ENCODE measurements at regions of chr6 and their contacts with region 1.

Region 1: DNA sequence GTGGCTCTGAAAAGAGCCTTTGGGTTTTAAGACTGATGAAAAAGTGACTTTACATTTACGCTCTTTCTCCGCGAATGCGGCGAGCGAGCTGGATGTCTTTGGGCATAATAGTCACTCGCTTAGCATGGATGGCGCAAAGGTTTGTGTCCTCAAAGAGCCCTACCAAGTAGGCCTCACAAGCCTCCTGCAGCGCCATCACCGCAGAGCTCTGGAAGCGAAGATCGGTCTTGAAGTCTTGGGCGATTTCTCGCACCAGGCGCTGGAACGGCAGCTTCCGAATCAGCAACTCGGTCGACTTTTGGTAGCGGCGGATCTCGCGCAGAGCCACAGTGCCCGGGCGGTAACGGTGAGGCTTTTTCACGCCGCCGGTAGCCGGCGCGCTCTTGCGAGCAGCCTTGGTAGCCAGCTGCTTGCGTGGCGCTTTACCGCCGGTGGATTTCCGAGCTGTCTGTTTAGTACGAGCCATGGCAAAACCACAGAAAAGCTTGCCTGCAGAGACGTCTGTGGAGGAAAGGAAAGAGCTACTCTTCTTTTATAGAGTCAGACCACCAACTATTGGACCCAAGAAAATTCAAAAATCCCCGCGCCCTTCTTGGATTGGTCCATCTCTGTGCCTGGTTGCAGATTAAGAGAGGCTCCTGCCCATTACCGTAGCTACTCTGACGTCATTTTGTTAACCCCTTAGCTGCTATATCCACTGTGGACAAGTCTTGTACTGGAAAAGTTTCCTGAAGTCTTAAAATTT is 55.5 kb upstream of the HFE start:
- DNase-seq: peak; percentile 100
- ATAC-seq: peak; percentile 79
- H3K4me3 ChIP-seq: peak overlapping the region; percentile 71 to 83 (median 82)
- H3K27ac ChIP-seq: peak overlapping the region; percentile 93
- H3K4me1 ChIP-seq: peaks cover 37% of the 10 kb centered on the region
- H3K27me3 ChIP-seq: no peaks in the 10 kb centered on the region; a peak in 1 of 5 replicates
- CTCF ChIP-seq: peak; percentile 52
- EP300 ChIP-seq: peak; percentile 40 to 80; a peak in 2 of 4 replicates
- POLR2A ChIP-seq: peak; percentile 99
- RAD21 ChIP-seq: peak; percentile 61

Region 2: DNA sequence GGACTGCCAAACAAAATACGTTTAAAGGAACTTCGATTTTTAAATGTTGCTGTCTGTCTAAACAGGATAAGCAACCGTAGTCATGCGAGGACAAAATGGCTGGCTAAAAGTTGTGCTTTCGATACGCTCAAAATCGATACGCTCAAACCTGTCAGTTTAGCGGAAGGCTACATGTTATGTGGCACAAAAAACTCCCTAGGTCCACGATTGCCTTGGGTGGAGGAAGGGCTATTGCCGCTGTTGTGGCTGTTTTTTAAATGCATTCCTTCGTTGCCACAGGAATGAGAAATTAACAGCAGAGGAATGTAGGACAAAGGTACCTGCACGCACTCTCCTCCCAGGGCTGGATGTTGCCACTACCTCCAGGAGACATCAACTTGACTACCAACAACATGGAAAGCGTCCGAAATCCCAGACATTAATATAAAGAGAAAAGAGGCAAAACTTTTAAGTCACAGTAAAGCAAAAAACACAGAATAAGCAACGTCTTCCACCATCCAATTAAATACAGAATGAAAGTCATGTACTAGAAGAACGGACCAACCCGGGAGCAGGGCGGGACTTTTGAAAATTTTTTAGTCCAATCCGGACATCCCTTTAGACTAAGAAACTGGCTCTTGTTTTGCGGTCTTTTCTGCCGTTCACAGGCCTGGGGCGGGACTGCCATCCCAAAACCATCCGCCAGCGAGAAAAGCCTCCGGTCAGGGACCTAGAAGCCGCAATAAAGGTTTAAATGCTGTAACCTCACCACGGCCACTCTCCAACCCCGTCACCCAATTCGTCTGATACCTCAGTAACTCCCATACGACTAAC is 23.3 kb after region 1 on chr6:
- CTCF ChIA-PET with region 1: no interaction called
- POLR2A ChIA-PET with region 1: interaction called, 16 read pairs
- in situ Hi-C with region 1: no loop called
- intact Hi-C with region 1: loop called (anchors 1 kb)
- DNase-seq: peak; percentile 97
- ATAC-seq: peak; percentile 82
- H3K4me3 ChIP-seq: peak overlapping the region; percentile 69 to 85 (median 85)
- H3K27ac ChIP-seq: peak overlapping the region; percentile 90
- H3K4me1 ChIP-seq: peaks cover 26% of the 10 kb centered on the region
- H3K27me3 ChIP-seq: no peaks in the 10 kb centered on the region; a peak in 1 of 5 replicates
- CTCF ChIP-seq: peak; percentile 32; the same call in 1 of the 2 replicates
- EP300 ChIP-seq: peak in 1 of 2 experiments; percentile 27; a peak in 1 of 4 replicates
- POLR2A ChIP-seq: peak; percentile 79 to 98; a peak in 3 of 4 replicates
- RAD21 ChIP-seq: peak; percentile 50

Region 3: DNA sequence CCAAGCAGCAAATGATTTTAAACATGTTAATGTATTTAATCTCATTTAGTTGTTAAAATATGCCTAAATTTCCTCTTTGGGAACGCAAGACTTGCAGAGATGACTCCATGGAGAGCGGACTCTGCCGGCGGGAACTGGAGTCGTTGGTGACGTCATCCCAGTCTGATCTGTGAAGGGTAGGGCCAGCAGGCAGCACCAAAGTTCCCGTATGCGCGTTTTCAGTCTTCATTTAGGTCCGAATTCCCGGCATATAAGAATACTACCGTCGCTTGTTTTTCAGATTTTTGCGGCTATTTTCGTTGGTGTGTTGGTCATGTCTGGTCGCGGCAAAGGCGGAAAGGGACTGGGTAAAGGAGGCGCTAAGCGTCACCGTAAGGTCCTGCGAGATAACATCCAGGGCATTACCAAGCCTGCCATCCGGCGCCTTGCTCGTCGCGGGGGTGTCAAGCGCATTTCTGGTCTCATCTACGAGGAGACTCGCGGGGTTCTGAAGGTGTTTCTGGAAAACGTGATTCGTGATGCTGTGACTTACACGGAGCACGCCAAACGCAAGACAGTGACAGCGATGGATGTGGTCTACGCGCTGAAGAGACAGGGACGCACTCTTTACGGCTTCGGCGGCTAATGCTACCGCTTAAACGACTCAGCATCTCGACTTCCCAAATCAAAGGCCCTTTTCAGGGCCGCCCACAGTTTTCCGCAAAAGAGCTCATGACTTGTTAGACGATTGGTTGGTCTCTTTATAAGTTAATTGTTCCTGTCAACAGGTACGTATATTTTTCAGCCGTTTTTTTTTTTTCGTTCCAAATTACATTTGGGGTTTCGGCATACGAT is 172.8 kb after region 1 on chr6:
- CTCF ChIA-PET with region 1: no interaction called
- POLR2A ChIA-PET with region 1: interaction called, 50 read pairs
- in situ Hi-C with region 1: no loop called
- intact Hi-C with region 1: loop called (anchors 2 kb)
- DNase-seq: peak; percentile 98
- ATAC-seq: peak; percentile 75
- H3K4me3 ChIP-seq: peak overlapping the region; percentile 62 to 95 (median 77)
- H3K27ac ChIP-seq: peak overlapping the region; percentile 87
- H3K4me1 ChIP-seq: peaks cover 36% of the 10 kb centered on the region
- H3K27me3 ChIP-seq: no peaks in the 10 kb centered on the region; a peak in 1 of 5 replicates
- CTCF ChIP-seq: peak; percentile 53
- EP300 ChIP-seq: peak in 1 of 2 experiments; percentile 89; a peak in 3 of 4 replicates
- POLR2A ChIP-seq: peak; percentile 98 to 99
- RAD21 ChIP-seq: no peak; the same call in 1 of the 2 replicates

Region 4: DNA sequence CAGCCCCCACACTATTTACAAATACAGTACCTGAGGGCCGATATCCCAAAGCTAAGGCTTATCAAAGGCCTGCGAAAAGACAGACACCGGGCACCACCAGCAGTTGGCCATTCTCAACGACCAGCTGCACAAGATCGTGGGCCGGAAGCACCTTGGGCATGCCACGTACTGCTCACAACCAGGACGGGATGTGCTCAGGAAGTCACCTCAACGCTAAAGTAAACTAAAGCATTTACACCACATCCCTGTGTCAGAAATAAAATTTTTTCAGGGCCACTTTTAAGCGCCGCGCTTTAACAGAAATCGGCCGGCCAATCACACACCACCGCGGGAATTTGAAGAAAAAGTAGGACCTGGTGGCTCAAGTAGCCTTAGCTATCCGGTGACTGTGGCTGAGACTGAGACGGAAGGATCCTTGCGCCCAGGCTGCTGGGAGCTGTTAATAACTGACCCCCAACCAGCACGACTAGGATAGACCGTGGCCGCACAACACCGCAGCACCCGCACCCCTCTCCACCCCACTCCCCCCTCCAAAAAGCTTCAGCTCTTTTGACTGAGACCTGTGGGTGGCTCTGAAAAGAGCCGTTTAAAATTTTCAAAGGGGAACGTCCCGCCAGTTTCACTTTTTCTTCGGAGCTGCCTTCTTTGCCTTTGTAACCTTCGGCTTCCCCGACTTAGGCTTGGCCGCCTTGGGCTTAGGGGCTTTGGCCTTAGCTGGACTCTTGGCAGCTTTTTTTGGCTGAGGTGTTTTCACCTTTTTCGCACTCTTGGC is 202.1 kb after region 1 on chr6:
- CTCF ChIA-PET with region 1: no interaction called
- POLR2A ChIA-PET with region 1: no interaction called
- in situ Hi-C with region 1: no loop called
- intact Hi-C with region 1: no loop called
- DNase-seq: no peak
- ATAC-seq: peak; percentile 79
- H3K4me3 ChIP-seq: peak overlapping the region; percentile 49 to 73 (median 60)
- H3K27ac ChIP-seq: no peak overlapping the region
- H3K4me1 ChIP-seq: peaks cover 25% of the 10 kb centered on the region; the same call in 1 of the 2 replicates
- H3K27me3 ChIP-seq: peaks cover 0 to 28% of the 10 kb centered on the region in 2 experiments; a peak in 3 of 5 replicates
- CTCF ChIP-seq: no peak
- EP300 ChIP-seq: no peak
- POLR2A ChIP-seq: no peak
- RAD21 ChIP-seq: no peak